GM12878 (cell line): ENCODE measurements at regions of chr10 and their contacts with region 1.

Region 1: DNA sequence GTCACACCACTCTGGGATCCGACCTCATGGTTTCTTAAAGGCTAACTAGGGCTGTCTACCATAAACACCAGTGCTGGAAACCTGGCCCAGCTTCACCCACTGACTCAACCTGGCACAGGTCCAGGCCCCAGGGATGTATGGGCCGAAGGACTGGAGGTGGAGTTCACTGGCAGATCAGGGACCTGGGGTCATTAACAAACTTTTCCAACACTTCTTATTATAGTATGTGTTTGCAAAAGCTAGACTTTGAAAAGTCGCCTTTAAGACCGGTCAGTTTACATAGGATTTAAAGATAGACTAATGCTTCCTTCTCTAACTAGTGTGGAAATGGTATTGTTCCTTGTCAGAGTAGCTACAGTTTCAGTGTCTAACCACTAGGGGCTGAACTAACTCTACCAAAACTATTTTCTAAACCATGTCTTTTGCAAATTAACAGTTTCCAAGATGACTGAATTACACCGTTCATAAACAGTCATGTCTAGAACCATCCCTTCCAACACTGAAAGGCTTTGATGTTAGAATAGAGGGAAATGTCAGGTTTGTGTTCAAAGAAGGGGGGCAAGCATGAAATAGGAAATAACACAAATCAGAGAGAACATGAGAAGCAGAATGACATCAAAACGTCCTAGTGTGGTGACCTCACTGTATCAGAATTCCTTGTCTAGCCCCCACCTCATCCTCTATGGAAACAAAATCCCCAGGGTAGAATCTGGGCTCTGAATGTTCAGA is 29.7 kb downstream of the STN1 start:
- DNase-seq: no peak
- ATAC-seq: peak; percentile 86
- H3K4me3 ChIP-seq: no peak overlapping the region
- H3K27ac ChIP-seq: no peak overlapping the region
- H3K4me1 ChIP-seq: no peaks in the 10 kb centered on the region
- H3K27me3 ChIP-seq: no peaks in the 10 kb centered on the region
- CTCF ChIP-seq: peak; percentile 83 to 95 (median 91); a peak in 5 of 6 replicates
- EP300 ChIP-seq: no peak
- POLR2A ChIP-seq: no peak
- RAD21 ChIP-seq: peak; percentile 87

Region 2: GRCh38 chr10:103712570-103713498 is 175.4 kb before region 1 on chr10:
- CTCF ChIA-PET with region 1: interaction called, 120 read pairs
- POLR2A ChIA-PET with region 1: no interaction called
- RAD21 ChIA-PET with region 1: interaction called, 45 read pairs
- SMC1A ChIA-PET with region 1: interaction called, 32 read pairs
- in situ Hi-C with region 1: no loop called
- intact Hi-C with region 1: loop called (anchors 1 kb)
- DNase-seq: no peak
- ATAC-seq: peak; percentile 94
- H3K4me3 ChIP-seq: no peak overlapping the region
- H3K27ac ChIP-seq: no peak overlapping the region
- H3K4me1 ChIP-seq: no peaks in the 10 kb centered on the region
- H3K27me3 ChIP-seq: no peaks in the 10 kb centered on the region
- CTCF ChIP-seq: peak; percentile 79 to 92 (median 86)
- EP300 ChIP-seq: no peak
- POLR2A ChIP-seq: no peak
- RAD21 ChIP-seq: peak; percentile 94

Region 3: DNA sequence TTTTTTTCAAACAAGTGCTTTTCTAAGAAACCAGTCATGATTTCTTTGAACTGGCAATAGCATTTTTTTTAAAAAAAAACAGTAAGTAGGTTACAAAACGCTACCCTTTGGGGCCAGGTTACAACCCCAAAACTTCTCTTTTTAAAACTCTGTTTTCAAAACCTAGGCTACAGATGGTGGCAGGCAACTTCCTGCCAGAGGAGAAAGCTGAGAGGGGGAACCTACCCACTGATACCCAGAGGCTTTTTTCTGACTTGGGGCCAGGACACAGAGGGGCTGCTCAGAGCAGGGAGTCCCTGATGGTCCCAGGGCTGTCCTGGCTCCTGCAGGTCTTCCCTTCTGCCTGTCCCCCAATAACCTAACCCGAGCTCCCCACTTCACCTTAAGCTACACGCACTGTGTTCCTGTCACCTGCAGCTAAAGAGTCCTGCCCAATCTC is 22.8 kb after region 1 on chr10:
- CTCF ChIA-PET with region 1: interaction called, 11 read pairs
- POLR2A ChIA-PET with region 1: no interaction called
- RAD21 ChIA-PET with region 1: interaction called, 5 read pairs
- SMC1A ChIA-PET with region 1: interaction called, 7 read pairs
- in situ Hi-C with region 1: no loop called
- intact Hi-C with region 1: no loop called
- DNase-seq: no peak
- ATAC-seq: peak; percentile 20
- H3K4me3 ChIP-seq: no peak overlapping the region
- H3K27ac ChIP-seq: peak overlapping the region; percentile 63
- H3K4me1 ChIP-seq: peaks cover 29% of the 10 kb centered on the region
- H3K27me3 ChIP-seq: no peaks in the 10 kb centered on the region
- CTCF ChIP-seq: no peak
- EP300 ChIP-seq: no peak
- POLR2A ChIP-seq: no peak
- RAD21 ChIP-seq: no peak

Region 4: GRCh38 chr10:104005172-104005863 is 117.0 kb after region 1 on chr10:
- CTCF ChIA-PET with region 1: interaction called, 10 read pairs
- POLR2A ChIA-PET with region 1: no interaction called
- RAD21 ChIA-PET with region 1: interaction called, 3 read pairs
- SMC1A ChIA-PET with region 1: interaction called, 4 read pairs
- in situ Hi-C with region 1: no loop called
- intact Hi-C with region 1: loop called (anchors 5 kb)
- DNase-seq: no peak
- ATAC-seq: no peak
- H3K4me3 ChIP-seq: no peak overlapping the region
- H3K27ac ChIP-seq: no peak overlapping the region
- H3K4me1 ChIP-seq: no peaks in the 10 kb centered on the region
- H3K27me3 ChIP-seq: no peaks in the 10 kb centered on the region
- CTCF ChIP-seq: no peak
- EP300 ChIP-seq: no peak
- POLR2A ChIP-seq: no peak
- RAD21 ChIP-seq: no peak

Region 5: DNA sequence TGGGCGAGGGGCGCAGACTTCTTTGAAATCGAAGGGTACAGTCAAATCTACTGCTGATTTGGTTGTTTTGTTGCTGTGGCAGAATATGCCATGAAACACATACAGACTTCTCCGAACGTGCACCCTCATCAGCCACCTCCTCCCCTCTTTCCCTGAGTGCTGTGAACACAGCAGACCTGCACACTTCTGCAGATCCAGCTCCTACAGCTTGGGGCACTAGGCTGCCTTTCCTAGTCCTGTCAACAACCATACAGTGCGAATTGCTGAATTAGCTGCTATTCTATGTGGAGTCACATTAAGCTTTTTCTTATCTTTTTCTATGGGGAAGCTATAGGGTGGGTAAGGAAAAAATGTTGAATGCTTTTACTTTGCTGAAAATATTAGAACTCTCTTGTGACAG is 139.9 kb after region 1 on chr10:
- CTCF ChIA-PET with region 1: interaction called, 10 read pairs
- POLR2A ChIA-PET with region 1: no interaction called
- RAD21 ChIA-PET with region 1: interaction called, 4 read pairs
- SMC1A ChIA-PET with region 1: interaction called, 9 read pairs
- in situ Hi-C with region 1: no loop called
- intact Hi-C with region 1: no loop called
- DNase-seq: no peak
- ATAC-seq: peak; percentile 66; the same call in 2 of the 3 replicates
- H3K4me3 ChIP-seq: no peak overlapping the region
- H3K27ac ChIP-seq: no peak overlapping the region
- H3K4me1 ChIP-seq: no peaks in the 10 kb centered on the region
- H3K27me3 ChIP-seq: no peaks in the 10 kb centered on the region
- CTCF ChIP-seq: peak in 2 of 3 experiments; percentile 9 to 29; a peak in 2 of 6 replicates
- EP300 ChIP-seq: no peak
- POLR2A ChIP-seq: no peak
- RAD21 ChIP-seq: peak; percentile 11; the same call in 1 of the 2 replicates

Region 6: GRCh38 chr10:104139221-104139620 is 250.9 kb after region 1 on chr10:
- CTCF ChIA-PET with region 1: interaction called, 7 read pairs
- POLR2A ChIA-PET with region 1: no interaction called
- RAD21 ChIA-PET with region 1: interaction called, 12 read pairs
- SMC1A ChIA-PET with region 1: interaction called, 6 read pairs
- in situ Hi-C with region 1: no loop called
- intact Hi-C with region 1: no loop called
- DNase-seq: no peak
- ATAC-seq: peak; percentile 42; the same call in 1 of the 3 replicates
- H3K4me3 ChIP-seq: no peak overlapping the region
- H3K27ac ChIP-seq: no peak overlapping the region
- H3K4me1 ChIP-seq: no peaks in the 10 kb centered on the region
- H3K27me3 ChIP-seq: no peaks in the 10 kb centered on the region; a peak in 2 of 4 replicates
- CTCF ChIP-seq: peak; percentile 47 to 55 (median 48); a peak in 5 of 6 replicates
- EP300 ChIP-seq: no peak
- POLR2A ChIP-seq: no peak
- RAD21 ChIP-seq: peak; percentile 44; the same call in 1 of the 2 replicates